Breast epithelium (tissue), 4 donors: ENCODE measurements at regions of chr6 and their contacts with region 1.

Region 1: DNA sequence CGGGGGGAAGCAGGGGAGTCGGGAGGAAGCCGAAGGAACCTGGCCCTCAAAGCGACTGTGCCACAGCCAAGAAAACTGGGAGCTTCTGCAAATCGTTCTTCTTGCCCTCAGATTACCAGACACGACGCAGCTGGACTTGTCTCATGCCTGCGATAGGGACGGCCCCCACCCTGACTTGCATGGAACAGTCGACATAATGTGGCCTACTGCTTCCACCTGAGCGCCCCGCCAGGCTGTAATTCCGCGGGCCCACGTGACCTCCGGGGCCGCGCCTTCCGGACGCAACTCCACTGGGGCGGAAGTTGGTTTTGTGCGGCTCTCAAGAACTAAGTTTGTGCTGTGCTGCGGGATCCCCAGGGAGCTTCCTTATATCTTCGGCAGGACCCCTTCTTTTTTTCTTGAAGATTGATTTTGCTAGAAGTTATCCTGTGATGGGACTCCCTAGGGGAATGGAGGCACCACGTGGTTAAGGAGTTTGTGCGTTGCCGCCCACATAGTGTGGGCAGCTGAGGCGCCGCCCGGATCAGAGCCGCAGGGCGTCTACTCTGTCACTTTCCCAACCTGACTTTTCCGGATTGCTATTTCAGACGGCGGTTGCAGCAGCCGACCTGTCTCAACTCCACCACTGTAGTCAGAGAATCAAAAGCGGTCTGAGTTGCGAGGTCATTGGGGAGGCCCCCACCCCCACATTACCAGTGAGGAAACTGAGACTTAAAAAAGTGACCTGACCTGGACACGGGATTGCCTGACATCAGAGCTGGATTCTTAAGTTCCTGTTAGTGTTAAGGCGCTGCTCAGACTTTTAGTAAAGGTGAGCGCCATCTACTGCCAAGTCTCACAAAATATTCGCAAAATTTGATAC is 540 bp upstream of the CD164 start:
- DNase-seq: peak; percentile 90 to 91
- H3K4me3 ChIP-seq: peak overlapping the region; percentile 65 to 95 (median 95)
- H3K27ac ChIP-seq: peak overlapping the region; percentile 97 to 99
- H3K4me1 ChIP-seq: peaks cover 0 to 14% of the 10 kb centered on the region in 2 donors
- H3K27me3 ChIP-seq: no peaks in the 10 kb centered on the region
- CTCF ChIP-seq: peak; percentile 15 to 73 (median 35)
- POLR2A ChIP-seq: no peak

Region 2: DNA sequence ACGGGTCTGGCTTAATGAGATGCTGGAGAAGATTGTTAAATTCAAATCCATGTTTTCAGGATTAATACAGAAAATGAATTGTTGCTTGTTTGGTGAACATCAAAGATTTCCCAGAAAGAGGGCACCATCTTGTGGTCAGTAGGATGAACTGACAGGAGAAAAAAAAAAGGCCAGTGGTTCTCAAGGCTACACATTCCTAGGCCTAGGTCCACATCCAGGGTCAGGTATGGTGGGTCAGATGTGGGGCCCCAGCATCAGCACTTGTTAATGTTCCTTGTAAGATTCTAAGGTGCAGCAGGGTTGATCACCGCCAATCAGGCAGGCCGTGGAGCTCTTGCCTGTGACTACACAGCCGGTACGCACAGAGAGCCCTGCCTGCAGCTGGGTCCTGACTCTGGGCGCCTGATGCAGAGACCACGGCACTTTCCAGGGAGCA is 856.0 kb before region 1 on chr6:
- intact Hi-C with region 1: no loop called
- DNase-seq: no peak
- H3K4me3 ChIP-seq: no peak overlapping the region
- H3K27ac ChIP-seq: no peak overlapping the region
- H3K4me1 ChIP-seq: no peaks in the 10 kb centered on the region
- H3K27me3 ChIP-seq: no peaks in the 10 kb centered on the region
- CTCF ChIP-seq: peak; percentile 34 to 68 (median 67)
- POLR2A ChIP-seq: no peak

Region 3: GRCh38 chr6:109187399-109188114 is 195.2 kb before region 1 on chr6:
- intact Hi-C with region 1: loop called (anchors 10 kb)
- DNase-seq: peak; percentile 31 to 56
- H3K4me3 ChIP-seq: no peak overlapping the region
- H3K27ac ChIP-seq: no peak overlapping the region
- H3K4me1 ChIP-seq: no peaks in the 10 kb centered on the region
- H3K27me3 ChIP-seq: no peaks in the 10 kb centered on the region
- CTCF ChIP-seq: peak; percentile 63 to 90 (median 89)
- POLR2A ChIP-seq: no peak

Region 4: GRCh38 chr6:110357664-110358552 is 975.1 kb after region 1 on chr6 and contains the start of gene METTL24:
- intact Hi-C with region 1: no loop called
- DNase-seq: no peak
- H3K4me3 ChIP-seq: peak within 1 kb of the TSS; percentile 53 to 73 (median 54)
- H3K27ac ChIP-seq: peak within 1 kb of the TSS; percentile 69 to 92
- H3K4me1 ChIP-seq: no peaks in the 10 kb centered on the region
- H3K27me3 ChIP-seq: peaks cover 0 to 8% of the 10 kb centered on the region in 2 donors
- CTCF ChIP-seq: no peak
- POLR2A ChIP-seq: no peak
- total RNA-seq, gene METTL24: 0.96 to 6.6 (median 3.4) TPM